Ascending aorta (tissue), 2 donors: ENCODE measurements at regions of chr16 and their contacts with region 1.

Region 1: GRCh38 chr16:15874745-15875314 is 13.6 kb downstream of the CEP20 start:
- DNase-seq: peak in 1 of 2 donors; percentile 75
- H3K4me3 ChIP-seq: peak overlapping the region in 1 of 2 donors; percentile 17
- H3K27ac ChIP-seq: peak overlapping the region; percentile 43 to 58
- H3K4me1 ChIP-seq: peaks cover 0 to 12% of the 10 kb centered on the region in 2 donors
- H3K27me3 ChIP-seq: no peaks in the 10 kb centered on the region
- CTCF ChIP-seq: peak; percentile 64 to 74 (median 70)

Region 2: DNA sequence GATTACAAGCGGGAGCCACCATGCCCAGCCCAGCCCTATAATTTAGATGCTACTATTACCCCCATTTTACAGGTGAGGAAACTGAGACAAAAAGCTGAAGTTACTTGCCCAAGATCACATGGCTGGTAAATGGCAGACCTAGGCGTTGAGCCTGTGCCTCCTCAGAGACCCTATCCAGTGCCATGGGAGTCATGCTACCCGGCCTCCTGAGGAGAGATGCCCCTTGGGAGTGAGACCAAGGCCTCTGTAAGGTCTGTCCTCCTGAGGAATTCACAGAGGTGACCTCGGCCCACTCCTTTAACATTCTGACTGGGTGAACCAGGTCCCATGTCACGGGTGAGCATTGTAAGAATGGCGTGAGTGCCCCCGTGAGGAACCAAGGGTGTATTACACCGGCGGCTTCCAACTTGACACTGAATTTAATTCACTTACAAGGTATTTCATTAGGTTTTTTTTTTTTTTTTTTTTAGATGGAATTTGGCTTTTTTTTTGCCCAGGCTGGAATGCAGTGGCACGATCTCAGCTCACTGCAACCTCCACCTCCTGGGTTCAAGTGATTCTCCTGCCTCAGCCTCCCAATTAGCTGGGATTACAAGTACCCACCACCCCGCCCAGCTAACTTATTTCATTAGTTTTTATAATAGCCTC is 252.8 kb after region 1 on chr16:
- intact Hi-C with region 1: loop called (anchors 1 kb)
- DNase-seq: peak in 1 of 2 donors; percentile 86
- H3K4me3 ChIP-seq: no peak overlapping the region
- H3K27ac ChIP-seq: peak overlapping the region; percentile 32 to 62
- H3K4me1 ChIP-seq: no peaks in the 10 kb centered on the region
- H3K27me3 ChIP-seq: no peaks in the 10 kb centered on the region
- CTCF ChIP-seq: peak; percentile 86 to 91 (median 88)